Left cardiac atrium (tissue), 4 donors: ENCODE measurements at regions of chr17 and their contacts with region 1.

Region 1: DNA sequence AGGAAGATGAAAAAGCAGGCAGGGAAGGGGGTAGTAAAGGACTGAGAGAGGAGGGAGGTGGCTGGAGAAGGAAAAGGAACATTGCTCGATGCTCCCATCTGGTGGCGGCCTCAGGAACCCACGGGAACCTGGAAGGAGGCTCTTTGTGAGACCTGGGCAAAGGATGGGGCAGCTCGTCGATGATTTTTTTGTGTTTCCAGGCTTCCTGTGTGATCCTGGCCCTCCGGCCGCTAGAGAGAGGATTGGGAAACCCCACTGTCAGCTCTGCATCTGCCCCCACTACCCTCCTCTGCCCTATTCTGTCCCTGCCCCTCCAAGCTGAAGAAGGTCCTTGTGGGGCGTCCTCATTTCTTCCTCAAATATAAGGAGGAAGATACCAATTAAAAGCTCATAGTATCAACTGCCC is 6.6 kb downstream of the WFIKKN2 start:
- DNase-seq: peak; percentile 68
- ATAC-seq: peak; percentile 65 to 77

Region 2: DNA sequence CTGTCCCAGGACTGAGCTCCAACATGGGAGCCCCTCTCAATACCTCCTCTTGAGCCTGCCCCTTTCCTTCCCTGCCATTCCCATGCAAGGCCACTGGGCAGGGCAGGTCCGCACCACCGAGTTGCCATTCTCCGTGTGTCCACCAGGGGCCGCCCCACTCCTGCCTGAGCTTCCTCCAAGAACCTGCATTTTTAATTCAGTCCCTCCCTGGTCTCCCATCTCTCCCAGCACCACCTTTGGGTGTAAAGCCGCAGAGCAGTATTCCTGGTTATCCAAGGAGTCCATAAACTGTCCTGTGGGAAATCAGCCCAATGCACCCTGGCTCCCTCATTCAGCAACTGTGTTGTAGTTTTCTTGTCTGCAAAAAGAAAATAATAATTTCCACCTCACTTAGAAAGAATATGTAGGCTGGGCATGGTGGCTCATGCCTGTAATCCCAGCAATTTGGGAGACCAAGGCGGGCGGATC is 58.7 kb before region 1 on chr17:
- intact Hi-C with region 1: loop called (anchors 2 to 5 kb)
- DNase-seq: peak; percentile 81
- ATAC-seq: peak; percentile 91